ENCODE measurements at regions of chr11 and their contacts with region 1.

Region 1: DNA sequence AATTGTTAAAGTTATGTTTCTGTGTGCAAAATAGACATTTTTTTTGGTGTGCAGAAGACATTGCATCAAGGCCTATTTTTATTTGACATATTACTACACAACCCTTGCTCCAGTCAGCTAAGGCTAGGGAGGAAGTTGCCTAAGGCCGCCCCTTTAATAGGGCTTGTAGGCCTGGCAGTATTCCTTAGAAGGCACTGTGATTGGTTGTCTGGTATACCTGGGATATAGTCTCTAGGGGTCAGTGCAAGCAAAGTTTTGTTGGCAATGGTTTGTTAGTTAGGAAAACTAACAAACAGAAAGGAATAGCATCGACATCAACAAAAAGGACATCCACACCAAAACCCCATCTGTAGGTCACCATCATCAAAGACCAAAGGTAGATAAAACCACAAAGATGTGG is 16.9 kb downstream of the CCDC15 start:
- DNase-seq: peak; percentile 30
- H3K4me3 ChIP-seq: no peak overlapping the region
- H3K27ac ChIP-seq: no peak overlapping the region
- H3K4me1 ChIP-seq: no peaks in the 10 kb centered on the region
- H3K27me3 ChIP-seq: no peaks in the 10 kb centered on the region
- CTCF ChIP-seq: no peak

Region 2: GRCh38 chr11:125874556-125875124 is 903.7 kb after region 1 on chr11:
- CTCF ChIA-PET with region 1: no interaction called
- POLR2A ChIA-PET with region 1: no interaction called
- intact Hi-C with region 1: loop called (anchors 10 kb)
- DNase-seq: peak; percentile 87
- H3K4me3 ChIP-seq: no peak overlapping the region
- H3K27ac ChIP-seq: no peak overlapping the region
- H3K4me1 ChIP-seq: no peaks in the 10 kb centered on the region
- H3K27me3 ChIP-seq: no peaks in the 10 kb centered on the region
- CTCF ChIP-seq: peak; percentile 88